ENCODE measurements at regions of chr5 and their contacts with region 1.

Region 1: GRCh38 chr5:79514391-79515105 is 614 bp upstream of the HOMER1 start:
- DNase-seq: peak; percentile 97
- H3K4me3 ChIP-seq: peak overlapping the region; percentile 79 to 99 (median 91)
- H3K27ac ChIP-seq: peak overlapping the region; percentile 94 to 100 (median 97)
- H3K4me1 ChIP-seq: peaks cover 0 to 38% (median 16%) of the 10 kb centered on the region in 4 donors
- H3K27me3 ChIP-seq: no peaks in the 10 kb centered on the region
- CTCF ChIP-seq: no peak
- EP300 ChIP-seq: peak in 1 of 4 donors; percentile 60
- POLR2A ChIP-seq: peak; percentile 76 to 77

Region 2: DNA sequence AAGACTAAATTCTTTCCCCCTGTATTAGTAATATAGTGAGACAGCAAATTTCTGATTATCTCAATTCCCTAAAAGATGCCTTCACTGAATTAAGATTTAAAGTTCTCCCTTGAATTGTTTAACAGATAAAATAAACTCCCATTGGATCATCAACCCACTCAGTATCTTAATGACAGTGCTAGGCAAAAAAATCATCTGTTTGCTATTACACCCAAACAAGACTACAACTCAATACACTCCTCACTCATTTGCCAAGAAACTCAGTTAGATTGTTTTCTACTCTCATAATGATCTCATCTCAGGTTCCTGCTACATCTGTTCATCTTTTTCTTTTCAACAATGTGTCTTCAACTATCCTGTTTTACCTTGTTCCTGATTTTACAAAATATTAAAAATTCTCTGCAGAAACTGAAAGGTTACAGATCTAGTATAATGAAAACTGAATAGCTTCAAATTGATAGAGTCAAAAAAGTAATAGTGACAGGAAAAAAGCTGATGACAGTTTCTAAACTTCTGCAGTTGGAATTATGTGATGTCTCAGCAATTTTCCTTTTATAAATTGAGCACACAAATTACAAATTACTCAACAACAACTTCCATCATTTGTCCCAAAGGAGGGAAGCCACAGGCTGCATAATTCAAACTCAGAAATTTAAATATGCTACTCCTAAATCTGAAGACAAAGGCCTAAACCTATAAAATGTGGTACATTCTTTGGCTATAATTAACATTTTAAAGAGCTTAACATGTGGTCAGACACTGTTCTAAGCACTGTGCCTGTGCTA is 40.0 kb before region 1 on chr5:
- intact Hi-C with region 1: no loop called
- DNase-seq: no peak
- H3K4me3 ChIP-seq: no peak overlapping the region
- H3K27ac ChIP-seq: no peak overlapping the region
- H3K4me1 ChIP-seq: no peaks in the 10 kb centered on the region
- H3K27me3 ChIP-seq: no peaks in the 10 kb centered on the region
- CTCF ChIP-seq: no peak
- EP300 ChIP-seq: no peak
- POLR2A ChIP-seq: no peak

Region 3: GRCh38 chr5:79573983-79574890 is 59.7 kb after region 1 on chr5:
- intact Hi-C with region 1: no loop called
- DNase-seq: no peak
- H3K4me3 ChIP-seq: no peak overlapping the region
- H3K27ac ChIP-seq: no peak overlapping the region
- H3K4me1 ChIP-seq: no peaks in the 10 kb centered on the region
- H3K27me3 ChIP-seq: no peaks in the 10 kb centered on the region
- CTCF ChIP-seq: no peak
- EP300 ChIP-seq: no peak
- POLR2A ChIP-seq: no peak

Region 4: DNA sequence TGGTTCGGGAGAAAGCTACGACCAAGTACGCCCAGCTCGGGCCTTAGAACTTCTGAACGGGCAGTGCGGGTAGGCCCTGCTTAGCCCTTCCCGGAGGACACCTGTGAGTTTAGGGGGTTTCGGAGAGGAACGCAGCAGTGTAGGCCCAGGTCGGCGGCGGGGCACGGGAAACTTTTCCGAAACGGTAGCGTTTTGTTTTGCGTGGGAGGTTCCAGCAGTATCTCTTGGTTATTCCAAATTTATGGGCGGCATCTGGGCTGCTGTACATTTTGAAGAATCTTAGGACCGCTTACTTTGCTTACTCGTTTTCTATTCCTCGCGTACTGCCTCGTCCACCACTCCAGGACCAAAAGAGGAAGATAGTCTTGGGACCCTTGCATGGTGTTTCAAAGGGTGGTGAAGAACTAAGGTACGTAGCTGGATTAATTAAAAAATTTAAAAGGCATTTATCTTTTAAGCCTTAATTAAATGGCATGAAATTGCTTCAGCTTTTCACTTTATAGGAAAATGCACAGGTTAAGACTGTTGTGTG is 98.2 kb after region 1 on chr5:
- intact Hi-C with region 1: loop called (anchors 1 kb)
- DNase-seq: no peak
- H3K4me3 ChIP-seq: peak overlapping the region; percentile 59 to 80 (median 68)
- H3K27ac ChIP-seq: peak overlapping the region; percentile 80 to 94 (median 90)
- H3K4me1 ChIP-seq: peaks cover 0 to 28% (median 19%) of the 10 kb centered on the region in 4 donors
- H3K27me3 ChIP-seq: no peaks in the 10 kb centered on the region
- CTCF ChIP-seq: no peak
- EP300 ChIP-seq: no peak
- POLR2A ChIP-seq: no peak

Region 5: DNA sequence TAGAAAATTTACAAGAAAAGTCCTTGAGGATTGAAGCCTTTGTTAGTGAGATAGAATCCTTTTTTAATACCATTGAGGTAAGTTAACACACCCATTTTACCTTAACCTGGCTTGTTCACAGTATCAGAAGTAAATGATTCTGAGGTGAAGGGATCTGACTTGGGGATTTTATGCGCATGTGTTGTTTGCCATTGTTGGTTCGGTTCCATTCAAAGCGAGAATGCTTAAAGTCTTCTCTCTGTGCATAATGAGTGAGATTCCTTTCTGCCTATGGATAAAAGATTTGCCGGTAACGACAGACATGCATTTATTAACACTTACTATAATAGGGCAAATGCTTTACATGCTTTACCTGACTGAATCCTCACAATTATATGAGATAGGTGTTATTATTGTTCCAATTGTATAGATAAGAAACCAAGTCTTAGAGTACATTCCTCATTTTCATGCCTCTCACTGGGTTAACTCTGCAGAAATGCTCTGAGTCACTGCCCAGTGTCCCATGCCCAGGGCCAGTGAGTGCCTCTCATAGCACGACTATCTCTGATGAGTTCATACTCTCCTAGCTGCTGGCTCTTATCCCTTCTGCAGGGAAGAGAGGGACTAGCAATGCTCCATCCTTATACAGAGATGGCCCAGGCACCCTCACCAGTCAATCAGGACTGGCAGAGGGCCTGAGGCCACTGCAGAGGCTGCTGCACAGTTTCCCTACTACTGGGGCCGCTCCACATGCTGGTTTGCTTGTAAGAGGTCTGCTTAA is 229.5 kb after region 1 on chr5:
- intact Hi-C with region 1: no loop called
- DNase-seq: no peak
- H3K4me3 ChIP-seq: no peak overlapping the region
- H3K27ac ChIP-seq: no peak overlapping the region
- H3K4me1 ChIP-seq: no peaks in the 10 kb centered on the region
- H3K27me3 ChIP-seq: no peaks in the 10 kb centered on the region
- CTCF ChIP-seq: no peak
- EP300 ChIP-seq: no peak
- POLR2A ChIP-seq: no peak

Measured in sigmoid colon (tissue), 7 donors.